CD8-positive, alpha-beta T cell (primary cell): ENCODE measurements at regions of chr11 and their contacts with region 1.

Region 1: GRCh38 chr11:34051349-34052035 is at the start of gene CAPRIN1:
- DNase-seq: peak; percentile 71 to 93 (median 83)
- ATAC-seq: peak; percentile 70
- H3K4me3 ChIP-seq: peak within 1 kb of the TSS; percentile 79 to 85
- H3K4me3 Mint-ChIP-seq: peak within 1 kb of the TSS; percentile 98
- H3K27ac ChIP-seq: peak within 1 kb of the TSS; percentile 98 to 99
- H3K27ac Mint-ChIP-seq: peak within 1 kb of the TSS; percentile 96
- H3K4me1 ChIP-seq: peaks cover 35% of the 10 kb centered on the region
- H3K4me1 Mint-ChIP-seq: peaks cover 29% of the 10 kb centered on the region
- H3K27me3 ChIP-seq: no peaks in the 10 kb centered on the region
- H3K27me3 Mint-ChIP-seq: peaks cover 3% of the 10 kb centered on the region
- CTCF ChIP-seq: no peak
- total RNA-seq, gene CAPRIN1: 92.8 to 102 TPM

Region 2: DNA sequence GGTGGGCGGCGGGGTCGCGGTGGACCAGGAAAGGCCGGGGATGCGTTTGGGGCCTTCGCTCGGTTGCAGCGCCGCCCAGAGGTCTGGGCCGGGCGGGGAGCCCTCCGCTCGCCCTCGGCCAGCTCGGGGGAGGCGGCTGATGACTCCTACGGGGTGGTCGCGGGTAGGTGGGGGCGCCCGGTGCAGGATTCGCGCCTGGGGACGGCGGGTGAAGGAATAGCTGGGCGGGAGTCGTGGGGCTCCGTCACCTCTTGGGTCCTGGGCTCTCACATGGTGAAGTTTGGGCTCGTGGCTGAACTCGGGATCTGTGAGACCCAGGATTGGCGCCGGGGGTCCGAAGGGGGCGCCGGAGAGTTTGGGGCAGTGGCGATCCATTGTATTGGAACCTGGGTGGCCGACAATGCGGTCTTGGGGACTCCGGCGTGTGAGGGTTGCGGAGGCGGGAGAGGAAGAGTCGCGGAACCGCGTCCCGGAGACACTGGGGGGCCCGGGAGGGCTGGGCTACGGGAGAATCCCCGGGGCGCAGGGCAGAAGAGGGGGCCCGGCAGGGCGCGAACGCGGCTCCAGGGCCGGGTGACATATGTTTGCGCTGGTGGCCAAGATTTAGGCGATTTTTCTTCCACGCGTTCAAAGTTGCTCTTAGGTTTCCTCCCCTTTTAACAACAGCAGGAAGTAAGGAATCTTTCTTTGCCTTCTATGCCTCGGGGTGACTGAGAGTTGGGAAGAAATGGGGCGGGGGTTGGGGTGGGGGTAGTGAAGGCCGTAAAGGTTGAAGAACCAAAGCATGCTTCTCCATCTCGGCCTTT is 1157.9 kb before region 1 on chr11:
- CTCF ChIA-PET with region 1: no interaction called
- POLR2A ChIA-PET with region 1: no interaction called
- intact Hi-C with region 1: loop called in 1 of 2 experiments (anchors 5 kb)
- DNase-seq: peak in 8 of 9 experiments; percentile 21 to 75 (median 54)
- ATAC-seq: peak; percentile 50
- H3K4me3 ChIP-seq: peak overlapping the region; percentile 79 to 87
- H3K4me3 Mint-ChIP-seq: peak overlapping the region; percentile 92
- H3K27ac ChIP-seq: peak overlapping the region; percentile 36 to 51
- H3K27ac Mint-ChIP-seq: peak overlapping the region; percentile 74
- H3K4me1 ChIP-seq: peaks cover 27% of the 10 kb centered on the region
- H3K4me1 Mint-ChIP-seq: peaks cover 33% of the 10 kb centered on the region
- H3K27me3 ChIP-seq: no peaks in the 10 kb centered on the region
- H3K27me3 Mint-ChIP-seq: no peaks in the 10 kb centered on the region
- CTCF ChIP-seq: peak; percentile 35

Region 3: DNA sequence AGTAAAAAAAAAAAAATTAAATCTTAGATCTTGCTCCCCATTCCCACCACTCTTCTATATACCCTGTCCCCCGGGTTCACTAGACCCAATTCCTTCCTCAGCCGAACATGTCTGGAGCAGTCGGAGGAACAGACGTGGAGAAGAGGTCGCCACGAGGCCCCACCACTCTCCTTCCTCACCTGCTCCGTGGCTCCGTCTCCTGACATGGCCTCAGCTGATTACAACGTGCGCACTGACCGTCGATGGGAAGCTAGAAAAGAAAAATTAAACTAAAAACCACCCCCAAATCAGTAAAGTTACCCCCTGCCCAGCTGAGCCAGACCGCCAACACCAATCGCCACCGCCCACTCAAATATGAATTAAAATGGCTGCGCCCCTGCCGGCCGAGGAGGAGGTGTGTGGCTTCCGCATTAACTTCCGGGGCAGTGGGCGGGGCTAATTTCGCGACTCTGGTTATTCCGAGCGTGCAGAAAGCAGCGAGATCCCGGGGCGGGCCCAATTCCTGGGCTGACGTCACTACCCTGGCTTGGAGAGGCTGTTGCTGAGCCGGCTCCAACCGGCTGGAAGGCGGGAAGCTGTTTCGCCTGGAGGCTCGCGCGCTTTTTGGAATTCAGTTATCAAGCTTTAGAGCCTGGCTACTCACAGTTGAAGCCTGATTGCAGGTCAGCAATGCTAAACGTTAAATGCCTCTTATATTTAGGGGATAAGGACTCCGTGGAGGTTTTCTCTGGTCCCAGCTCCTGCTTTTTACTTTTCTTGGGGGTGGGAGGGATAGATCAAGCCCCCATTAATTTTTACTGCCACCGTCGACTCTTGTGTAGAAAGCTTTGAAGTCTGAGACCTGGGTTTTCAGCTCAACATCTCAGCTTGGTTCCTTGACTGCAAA is 890.1 kb before region 1 on chr11 and contains the start of gene CSTF3:
- CTCF ChIA-PET with region 1: no interaction called
- POLR2A ChIA-PET with region 1: no interaction called
- intact Hi-C with region 1: loop called in 1 of 2 experiments (anchors 10 kb)
- DNase-seq: peak; percentile 85 to 98 (median 94)
- ATAC-seq: peak; percentile 94
- H3K4me3 ChIP-seq: peak within 1 kb of the TSS; percentile 73 to 79
- H3K4me3 Mint-ChIP-seq: peak within 1 kb of the TSS; percentile 99
- H3K27ac ChIP-seq: peak within 1 kb of the TSS; percentile 77 to 89
- H3K27ac Mint-ChIP-seq: peak within 1 kb of the TSS; percentile 96
- H3K4me1 ChIP-seq: peaks cover 35% of the 10 kb centered on the region
- H3K4me1 Mint-ChIP-seq: peaks cover 47% of the 10 kb centered on the region
- H3K27me3 ChIP-seq: no peaks in the 10 kb centered on the region
- H3K27me3 Mint-ChIP-seq: no peaks in the 10 kb centered on the region
- CTCF ChIP-seq: no peak
- total RNA-seq, gene CSTF3: 7.0 to 7.9 TPM

Region 4: GRCh38 chr11:34068111-34068510 is 16.6 kb after region 1 on chr11:
- CTCF ChIA-PET with region 1: interaction called, 5 read pairs
- POLR2A ChIA-PET with region 1: interaction called, 4 read pairs
- intact Hi-C with region 1: loop called in 1 of 2 experiments (anchors 1 kb)
- DNase-seq: no peak
- ATAC-seq: no peak
- H3K4me3 ChIP-seq: no peak overlapping the region
- H3K4me3 Mint-ChIP-seq: no peak overlapping the region
- H3K27ac ChIP-seq: no peak overlapping the region
- H3K27ac Mint-ChIP-seq: peak overlapping the region; percentile 32
- H3K4me1 ChIP-seq: peaks cover 41% of the 10 kb centered on the region
- H3K4me1 Mint-ChIP-seq: peaks cover 76% of the 10 kb centered on the region
- H3K27me3 ChIP-seq: no peaks in the 10 kb centered on the region
- H3K27me3 Mint-ChIP-seq: no peaks in the 10 kb centered on the region
- CTCF ChIP-seq: no peak

Region 5: DNA sequence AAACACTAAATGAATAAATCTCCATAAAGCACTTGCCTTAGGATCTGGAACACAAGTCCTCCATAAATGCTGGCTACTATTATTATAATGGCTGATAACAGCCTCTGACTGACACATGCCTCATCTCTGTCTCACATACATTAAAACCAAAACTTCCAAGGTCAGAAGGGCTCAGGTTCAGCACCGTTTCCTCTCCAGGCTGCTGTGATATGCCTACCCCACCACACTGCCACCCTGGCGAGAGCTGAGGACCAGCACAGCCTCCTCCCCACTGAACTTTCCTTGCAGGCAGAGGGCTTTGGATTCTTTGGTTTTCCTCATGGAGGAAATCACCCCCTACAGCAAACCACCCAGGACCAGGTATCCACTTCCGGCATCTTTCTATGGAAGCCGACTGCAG is 193.5 kb after region 1 on chr11:
- CTCF ChIA-PET with region 1: no interaction called
- POLR2A ChIA-PET with region 1: no interaction called
- intact Hi-C with region 1: loop called (anchors 2 to 5 kb)
- DNase-seq: no peak
- ATAC-seq: no peak
- H3K4me3 ChIP-seq: no peak overlapping the region
- H3K4me3 Mint-ChIP-seq: no peak overlapping the region
- H3K27ac ChIP-seq: no peak overlapping the region
- H3K27ac Mint-ChIP-seq: no peak overlapping the region
- H3K4me1 ChIP-seq: peaks cover 27% of the 10 kb centered on the region
- H3K4me1 Mint-ChIP-seq: peaks cover 44% of the 10 kb centered on the region
- H3K27me3 ChIP-seq: no peaks in the 10 kb centered on the region
- H3K27me3 Mint-ChIP-seq: no peaks in the 10 kb centered on the region
- CTCF ChIP-seq: no peak

Region 6: GRCh38 chr11:35662649-35663407 is 1611.3 kb after region 1 on chr11 and contains the start of gene TRIM44:
- CTCF ChIA-PET with region 1: no interaction called
- POLR2A ChIA-PET with region 1: no interaction called
- intact Hi-C with region 1: loop called in 1 of 2 experiments (anchors 5 kb)
- DNase-seq: peak; percentile 57 to 89 (median 79)
- ATAC-seq: peak; percentile 81
- H3K4me3 ChIP-seq: peak within 1 kb of the TSS; percentile 91 to 97
- H3K4me3 Mint-ChIP-seq: peak within 1 kb of the TSS; percentile 96
- H3K27ac ChIP-seq: peak within 1 kb of the TSS; percentile 84 to 85
- H3K27ac Mint-ChIP-seq: peak within 1 kb of the TSS; percentile 97
- H3K4me1 ChIP-seq: peaks cover 23% of the 10 kb centered on the region
- H3K4me1 Mint-ChIP-seq: peaks cover 47% of the 10 kb centered on the region
- H3K27me3 ChIP-seq: peaks cover 0 to 4% of the 10 kb centered on the region in 2 experiments
- H3K27me3 Mint-ChIP-seq: no peaks in the 10 kb centered on the region
- CTCF ChIP-seq: no peak
- total RNA-seq, gene TRIM44: 25.7 to 29.5 TPM